ENCODE measurements at regions of chr1 and their contacts with region 1.

Region 1: DNA sequence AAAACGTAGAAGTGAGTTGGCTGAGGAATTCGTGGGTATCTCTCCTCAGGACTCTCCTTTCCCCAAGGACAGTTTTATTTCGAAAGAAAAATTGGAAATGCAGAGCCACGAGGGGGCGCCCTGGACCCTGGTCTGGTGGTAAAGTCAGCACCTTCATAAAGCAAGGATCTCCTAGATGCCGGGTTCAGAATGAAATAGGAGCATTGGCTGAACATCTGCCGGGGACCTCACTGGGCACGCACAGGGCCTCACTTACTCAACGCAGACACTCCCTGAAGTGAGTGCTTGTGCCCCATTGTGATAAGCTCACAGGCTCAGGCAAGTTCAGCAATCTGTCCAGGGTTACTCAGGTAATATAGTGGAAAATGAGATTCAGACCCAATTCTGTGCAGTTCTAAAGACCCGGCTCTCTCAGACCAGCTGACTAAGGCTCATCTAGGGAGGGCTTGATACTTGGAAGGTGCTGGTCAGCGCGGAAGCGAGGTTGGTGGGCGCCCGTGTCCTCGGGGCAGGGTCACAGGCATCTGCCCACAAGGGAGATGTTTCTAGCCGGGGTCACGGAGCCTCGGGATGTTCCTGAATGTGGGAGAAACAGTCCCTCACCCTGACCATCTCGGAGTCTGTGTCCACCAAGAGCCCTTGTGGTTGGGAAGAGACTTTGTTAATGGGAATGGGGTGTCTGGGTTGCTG is 55.7 kb upstream of the ETV3 start:
- DNase-seq: peak; percentile 44 to 80 (median 69)
- H3K4me3 ChIP-seq: no peak overlapping the region
- H3K27ac ChIP-seq: no peak overlapping the region
- H3K4me1 ChIP-seq: no peaks in the 10 kb centered on the region
- H3K27me3 ChIP-seq: peaks cover 24% of the 10 kb centered on the region
- CTCF ChIP-seq: peak; percentile 13 to 61 (median 46)
- POLR2A ChIP-seq: no peak

Region 2: GRCh38 chr1:157369808-157370521 is 176.1 kb after region 1 on chr1:
- intact Hi-C with region 1: loop called in 1 of 2 experiments (anchors 10 kb)
- DNase-seq: peak; percentile 27 to 64 (median 40)
- H3K4me3 ChIP-seq: no peak overlapping the region
- H3K27ac ChIP-seq: no peak overlapping the region
- H3K4me1 ChIP-seq: no peaks in the 10 kb centered on the region
- H3K27me3 ChIP-seq: peaks cover 3% of the 10 kb centered on the region
- CTCF ChIP-seq: peak; percentile 66 to 93 (median 76)
- POLR2A ChIP-seq: no peak

Measured in adrenal gland (tissue), 19 donors.